Natural killer cell (primary cell): ENCODE measurements at regions of chr5 and their contacts with region 1.

Region 1: GRCh38 chr5:40688127-40688761 is 8.5 kb downstream of the PTGER4 start:
- DNase-seq: peak; percentile 78 to 96
- ATAC-seq: peak; percentile 77 to 89 (median 81)
- H3K4me3 ChIP-seq: no peak overlapping the region
- H3K4me3 Mint-ChIP-seq: peak overlapping the region; percentile 89
- H3K27ac ChIP-seq: peak overlapping the region; percentile 45
- H3K27ac Mint-ChIP-seq: peak overlapping the region; percentile 91 to 95
- H3K4me1 ChIP-seq: peaks cover 32% of the 10 kb centered on the region
- H3K4me1 Mint-ChIP-seq: peaks cover 84 to 92% of the 10 kb centered on the region in 2 donors
- H3K27me3 ChIP-seq: no peaks in the 10 kb centered on the region
- H3K27me3 Mint-ChIP-seq: no peaks in the 10 kb centered on the region
- CTCF ChIP-seq: peak; percentile 78

Region 2: GRCh38 chr5:39578887-39579497 is 1109.3 kb before region 1 on chr5:
- intact Hi-C with region 1: loop called (anchors 1 kb)
- DNase-seq: peak in 1 of 2 donors; percentile 57
- ATAC-seq: no peak
- H3K4me3 ChIP-seq: no peak overlapping the region
- H3K4me3 Mint-ChIP-seq: no peak overlapping the region
- H3K27ac ChIP-seq: no peak overlapping the region
- H3K27ac Mint-ChIP-seq: no peak overlapping the region
- H3K4me1 ChIP-seq: no peaks in the 10 kb centered on the region
- H3K4me1 Mint-ChIP-seq: no peaks in the 10 kb centered on the region
- H3K27me3 ChIP-seq: no peaks in the 10 kb centered on the region
- H3K27me3 Mint-ChIP-seq: peaks cover 5 to 22% of the 10 kb centered on the region in 2 donors
- CTCF ChIP-seq: peak; percentile 92

Region 3: DNA sequence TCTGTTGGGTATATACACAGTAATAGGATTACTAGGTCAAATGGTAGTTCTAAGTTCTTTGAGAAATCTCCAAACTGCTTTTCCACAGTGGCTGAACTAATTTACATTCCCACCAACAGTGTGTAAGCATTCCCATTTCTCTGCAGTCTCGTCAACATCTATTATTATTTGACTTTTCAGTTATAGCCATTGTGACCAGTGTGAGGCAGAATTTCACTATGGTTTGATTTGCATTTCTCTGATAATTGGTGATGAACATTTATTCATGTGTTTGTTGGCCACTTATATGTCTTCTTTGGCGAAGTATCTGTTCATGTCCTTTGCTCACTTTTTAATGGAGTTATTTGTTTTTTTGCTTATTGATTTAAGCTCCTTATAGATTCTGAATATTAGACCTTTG is 667.2 kb before region 1 on chr5:
- intact Hi-C with region 1: loop called (anchors 1 kb)
- DNase-seq: peak in 1 of 2 donors; percentile 27
- ATAC-seq: no peak
- H3K4me3 ChIP-seq: no peak overlapping the region
- H3K4me3 Mint-ChIP-seq: no peak overlapping the region
- H3K27ac ChIP-seq: no peak overlapping the region
- H3K27ac Mint-ChIP-seq: no peak overlapping the region
- H3K4me1 ChIP-seq: no peaks in the 10 kb centered on the region
- H3K4me1 Mint-ChIP-seq: peaks cover 4 to 8% of the 10 kb centered on the region in 2 donors
- H3K27me3 ChIP-seq: no peaks in the 10 kb centered on the region
- H3K27me3 Mint-ChIP-seq: peaks cover 8 to 32% of the 10 kb centered on the region in 2 donors
- CTCF ChIP-seq: no peak

Region 4: DNA sequence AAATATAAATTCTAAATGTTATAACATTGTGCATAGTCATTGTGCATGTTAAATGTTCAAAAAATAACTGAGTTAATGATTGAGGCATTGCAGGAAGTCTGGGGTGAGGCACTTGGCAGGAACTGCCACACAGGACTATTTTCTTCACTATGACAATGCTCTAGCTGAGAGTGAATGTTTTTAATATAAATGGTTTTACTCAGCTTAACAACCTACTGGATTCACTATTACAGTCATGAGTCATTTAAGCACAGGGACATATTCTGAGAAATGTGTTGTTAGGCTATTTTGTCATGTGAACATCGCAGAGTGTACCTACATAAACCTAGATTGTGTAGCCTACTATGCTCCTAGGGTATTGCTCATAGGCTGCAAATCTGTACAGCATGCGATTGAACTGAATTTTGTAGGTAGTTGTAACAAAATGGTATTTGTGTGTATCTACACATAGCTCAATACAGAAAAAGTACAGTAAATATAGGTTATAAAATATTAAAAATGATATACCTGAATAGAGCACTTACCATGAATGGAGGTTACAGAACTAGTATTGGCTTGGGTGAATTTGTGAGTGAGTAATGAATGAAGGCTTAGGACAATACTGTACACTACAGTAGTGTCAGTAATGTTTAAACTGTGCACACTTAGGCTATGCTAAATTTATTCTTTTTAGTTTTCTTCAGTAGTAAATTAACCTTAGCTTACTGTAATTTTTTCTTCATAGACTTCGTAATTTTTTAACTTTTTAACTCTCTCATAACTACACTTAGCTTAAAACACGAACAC is 354.6 kb before region 1 on chr5:
- intact Hi-C with region 1: loop called (anchors 5 kb)
- DNase-seq: peak in 1 of 2 donors; percentile 10
- ATAC-seq: peak; percentile 60 to 86 (median 75)
- H3K4me3 ChIP-seq: no peak overlapping the region
- H3K4me3 Mint-ChIP-seq: no peak overlapping the region
- H3K27ac ChIP-seq: no peak overlapping the region
- H3K27ac Mint-ChIP-seq: peak overlapping the region in 1 of 2 donors; percentile 26
- H3K4me1 ChIP-seq: peaks cover 17% of the 10 kb centered on the region
- H3K4me1 Mint-ChIP-seq: peaks cover 43% of the 10 kb centered on the region in 2 donors
- H3K27me3 ChIP-seq: no peaks in the 10 kb centered on the region
- H3K27me3 Mint-ChIP-seq: no peaks in the 10 kb centered on the region
- CTCF ChIP-seq: no peak

Region 5: DNA sequence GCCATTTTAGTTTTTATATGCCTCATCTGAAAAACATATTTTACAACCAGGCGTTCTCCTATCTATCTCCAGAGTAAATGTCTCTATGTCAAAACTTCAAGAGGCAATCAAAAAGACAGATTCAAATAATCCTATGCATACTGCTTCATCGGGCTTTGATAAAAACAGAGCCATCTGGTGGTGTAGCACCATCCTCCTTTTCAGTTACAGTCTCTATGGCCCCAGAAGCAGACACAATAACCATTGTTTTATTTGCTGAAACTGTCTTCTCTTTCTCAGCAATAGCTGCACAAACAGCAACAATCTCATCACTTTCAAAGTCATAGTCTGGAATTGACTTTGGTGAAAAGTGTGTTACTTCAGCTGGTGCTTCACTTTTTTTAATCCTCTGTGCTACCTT is 27.8 kb after region 1 on chr5:
- intact Hi-C with region 1: no loop called
- DNase-seq: peak in 1 of 2 donors; percentile 33
- ATAC-seq: no peak
- H3K4me3 ChIP-seq: no peak overlapping the region
- H3K4me3 Mint-ChIP-seq: no peak overlapping the region
- H3K27ac ChIP-seq: no peak overlapping the region
- H3K27ac Mint-ChIP-seq: no peak overlapping the region
- H3K4me1 ChIP-seq: no peaks in the 10 kb centered on the region
- H3K4me1 Mint-ChIP-seq: peaks cover 5 to 13% of the 10 kb centered on the region in 2 donors
- H3K27me3 ChIP-seq: no peaks in the 10 kb centered on the region
- H3K27me3 Mint-ChIP-seq: no peaks in the 10 kb centered on the region
- CTCF ChIP-seq: no peak

Region 6: GRCh38 chr5:40736103-40736875 is 48.0 kb after region 1 on chr5:
- intact Hi-C with region 1: loop called (anchors 1 kb)
- DNase-seq: peak in 1 of 2 donors; percentile 80
- ATAC-seq: peak; percentile 72 to 83 (median 78)
- H3K4me3 ChIP-seq: no peak overlapping the region
- H3K4me3 Mint-ChIP-seq: no peak overlapping the region
- H3K27ac ChIP-seq: no peak overlapping the region
- H3K27ac Mint-ChIP-seq: no peak overlapping the region
- H3K4me1 ChIP-seq: peaks cover 3% of the 10 kb centered on the region
- H3K4me1 Mint-ChIP-seq: peaks cover 36 to 43% of the 10 kb centered on the region in 2 donors
- H3K27me3 ChIP-seq: no peaks in the 10 kb centered on the region
- H3K27me3 Mint-ChIP-seq: no peaks in the 10 kb centered on the region
- CTCF ChIP-seq: peak; percentile 90

Region 7: GRCh38 chr5:40834849-40835787 is 146.9 kb after region 1 on chr5 and contains the start of gene RPL37:
- intact Hi-C with region 1: loop called (anchors 10 kb)
- DNase-seq: peak; percentile 82 to 96
- ATAC-seq: peak; percentile 94 to 98 (median 96)
- H3K4me3 ChIP-seq: peak within 1 kb of the TSS; percentile 86
- H3K4me3 Mint-ChIP-seq: peak within 1 kb of the TSS; percentile 97
- H3K27ac ChIP-seq: peak within 1 kb of the TSS; percentile 96
- H3K27ac Mint-ChIP-seq: peak within 1 kb of the TSS; percentile 96 to 99
- H3K4me1 ChIP-seq: peaks cover 17% of the 10 kb centered on the region
- H3K4me1 Mint-ChIP-seq: peaks cover 48 to 54% of the 10 kb centered on the region in 2 donors
- H3K27me3 ChIP-seq: no peaks in the 10 kb centered on the region
- H3K27me3 Mint-ChIP-seq: no peaks in the 10 kb centered on the region
- CTCF ChIP-seq: no peak
- total RNA-seq, gene RPL37: 961 to 1,288 (median 1,179) TPM